CD8-positive, alpha-beta T cell (primary cell): ENCODE measurements at regions of chr1 and their contacts with region 1.

Region 1: DNA sequence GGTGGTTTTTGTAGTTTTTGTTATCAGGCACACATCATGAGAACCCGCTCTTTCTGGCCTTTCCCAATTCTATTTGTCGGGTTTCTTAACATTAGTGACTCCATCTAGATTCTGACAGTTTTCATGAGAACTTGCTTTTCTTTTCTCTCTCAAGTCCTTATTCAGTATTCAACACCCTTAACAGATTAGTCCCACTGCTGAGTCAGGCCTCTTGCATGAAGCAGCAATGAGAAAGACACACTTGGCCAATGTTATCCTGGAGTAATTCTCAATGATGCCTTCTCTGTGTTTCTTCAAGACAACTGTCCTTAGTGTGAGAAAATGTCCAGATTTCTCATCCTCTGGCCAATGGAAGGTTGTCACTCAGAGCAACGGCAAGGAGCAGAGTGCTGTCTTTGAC is 11.3 kb downstream of the FMO2 start:
- DNase-seq: no peak
- ATAC-seq: no peak
- H3K4me3 ChIP-seq: no peak overlapping the region
- H3K4me3 Mint-ChIP-seq: no peak overlapping the region
- H3K27ac ChIP-seq: no peak overlapping the region
- H3K27ac Mint-ChIP-seq: no peak overlapping the region
- H3K4me1 ChIP-seq: no peaks in the 10 kb centered on the region
- H3K4me1 Mint-ChIP-seq: no peaks in the 10 kb centered on the region
- H3K27me3 ChIP-seq: no peaks in the 10 kb centered on the region
- H3K27me3 Mint-ChIP-seq: no peaks in the 10 kb centered on the region
- CTCF ChIP-seq: no peak

Region 2: GRCh38 chr1:170749549-170749948 is 446.8 kb before region 1 on chr1:
- CTCF ChIA-PET with region 1: no interaction called
- POLR2A ChIA-PET with region 1: no interaction called
- intact Hi-C with region 1: no loop called
- DNase-seq: no peak
- ATAC-seq: no peak
- H3K4me3 ChIP-seq: no peak overlapping the region
- H3K4me3 Mint-ChIP-seq: no peak overlapping the region
- H3K27ac ChIP-seq: no peak overlapping the region
- H3K27ac Mint-ChIP-seq: no peak overlapping the region
- H3K4me1 ChIP-seq: no peaks in the 10 kb centered on the region
- H3K4me1 Mint-ChIP-seq: no peaks in the 10 kb centered on the region
- H3K27me3 ChIP-seq: no peaks in the 10 kb centered on the region
- H3K27me3 Mint-ChIP-seq: peaks cover 12% of the 10 kb centered on the region
- CTCF ChIP-seq: no peak

Region 3: DNA sequence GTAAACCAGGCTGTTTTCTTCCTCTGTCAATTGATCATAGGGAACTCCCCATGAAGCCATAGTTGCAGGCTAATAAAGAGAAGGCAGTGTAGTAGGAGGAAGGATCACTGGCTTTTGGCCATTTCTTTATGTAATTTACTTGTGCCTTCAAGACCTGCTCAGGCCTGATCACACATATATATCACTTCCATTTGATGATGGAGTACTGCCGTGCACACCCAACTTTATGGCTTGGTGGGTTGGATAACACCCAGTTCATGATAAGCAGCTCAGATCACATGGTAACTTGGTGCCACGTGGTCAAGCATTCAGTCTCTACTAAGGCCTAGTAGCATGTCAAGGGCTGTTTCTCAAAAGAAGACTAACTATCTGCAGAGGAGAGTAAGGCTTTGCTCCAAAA is 256.9 kb before region 1 on chr1:
- CTCF ChIA-PET with region 1: no interaction called
- POLR2A ChIA-PET with region 1: no interaction called
- intact Hi-C with region 1: no loop called
- DNase-seq: no peak
- ATAC-seq: no peak
- H3K4me3 ChIP-seq: no peak overlapping the region
- H3K4me3 Mint-ChIP-seq: no peak overlapping the region
- H3K27ac ChIP-seq: no peak overlapping the region
- H3K27ac Mint-ChIP-seq: no peak overlapping the region
- H3K4me1 ChIP-seq: no peaks in the 10 kb centered on the region
- H3K4me1 Mint-ChIP-seq: no peaks in the 10 kb centered on the region
- H3K27me3 ChIP-seq: no peaks in the 10 kb centered on the region
- H3K27me3 Mint-ChIP-seq: peaks cover 15% of the 10 kb centered on the region
- CTCF ChIP-seq: no peak

Region 4: DNA sequence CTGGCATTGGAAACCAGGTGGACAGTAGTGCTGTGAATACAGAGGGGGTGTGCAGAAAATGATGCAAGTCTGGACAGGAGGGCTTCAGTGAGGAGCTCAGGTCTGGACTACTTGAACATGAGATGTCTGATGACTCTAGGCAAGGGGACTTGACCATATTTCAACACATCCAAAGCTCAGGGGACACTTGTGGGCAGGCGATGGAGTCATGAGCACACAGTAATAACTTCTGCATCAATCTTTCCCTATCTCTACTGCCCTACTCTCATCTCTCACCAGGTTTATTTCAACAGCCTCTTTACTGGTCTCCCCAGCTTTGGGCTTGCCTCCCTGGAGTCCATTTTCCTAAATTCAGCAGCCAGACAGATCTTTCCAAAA is 10.6 kb after region 1 on chr1:
- CTCF ChIA-PET with region 1: no interaction called
- POLR2A ChIA-PET with region 1: no interaction called
- intact Hi-C with region 1: no loop called
- DNase-seq: no peak
- ATAC-seq: no peak
- H3K4me3 ChIP-seq: no peak overlapping the region
- H3K4me3 Mint-ChIP-seq: no peak overlapping the region
- H3K27ac ChIP-seq: no peak overlapping the region
- H3K27ac Mint-ChIP-seq: no peak overlapping the region
- H3K4me1 ChIP-seq: no peaks in the 10 kb centered on the region
- H3K4me1 Mint-ChIP-seq: no peaks in the 10 kb centered on the region
- H3K27me3 ChIP-seq: no peaks in the 10 kb centered on the region
- H3K27me3 Mint-ChIP-seq: peaks cover 10% of the 10 kb centered on the region
- CTCF ChIP-seq: no peak

Region 5: GRCh38 chr1:171217666-171218443 is 21.5 kb after region 1 on chr1:
- CTCF ChIA-PET with region 1: no interaction called
- POLR2A ChIA-PET with region 1: no interaction called
- intact Hi-C with region 1: loop called in 1 of 2 experiments (anchors 1 kb)
- DNase-seq: no peak
- ATAC-seq: no peak
- H3K4me3 ChIP-seq: no peak overlapping the region
- H3K4me3 Mint-ChIP-seq: no peak overlapping the region
- H3K27ac ChIP-seq: no peak overlapping the region
- H3K27ac Mint-ChIP-seq: no peak overlapping the region
- H3K4me1 ChIP-seq: no peaks in the 10 kb centered on the region
- H3K4me1 Mint-ChIP-seq: no peaks in the 10 kb centered on the region
- H3K27me3 ChIP-seq: no peaks in the 10 kb centered on the region
- H3K27me3 Mint-ChIP-seq: peaks cover 13% of the 10 kb centered on the region
- CTCF ChIP-seq: no peak

Region 6: DNA sequence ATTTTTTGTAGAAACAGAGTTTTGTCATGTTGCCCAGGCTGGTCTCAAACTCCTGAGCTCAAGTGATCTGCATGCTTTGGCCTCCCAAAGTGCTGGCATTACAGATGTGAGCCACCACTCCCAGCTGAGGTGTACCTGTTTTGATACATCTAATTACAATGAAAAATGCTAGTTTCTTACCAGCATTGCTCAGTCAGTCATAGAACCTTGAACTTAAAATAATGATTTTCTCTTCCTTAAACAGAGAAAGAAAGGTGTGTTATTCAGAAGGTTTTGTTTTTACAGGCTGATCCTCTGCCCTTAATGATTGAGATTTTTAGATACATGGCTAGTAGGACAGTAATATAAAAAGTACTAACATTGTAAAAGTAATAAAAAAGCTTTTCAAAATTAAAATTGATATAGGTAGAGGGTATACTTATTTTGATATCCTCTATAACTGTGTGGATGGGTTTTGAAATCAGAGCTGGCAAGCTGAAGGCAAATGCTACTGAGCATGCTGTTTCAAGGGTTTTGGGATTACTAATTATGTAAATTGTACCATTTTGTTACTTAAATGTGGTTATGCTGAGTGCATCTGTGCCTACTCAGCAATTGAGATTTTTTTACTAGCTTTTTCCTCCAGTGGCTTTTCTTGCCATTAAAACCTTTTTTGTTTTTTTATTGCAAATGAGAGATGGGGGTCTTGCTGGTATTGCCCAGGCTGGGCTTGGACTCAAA is 305.1 kb after region 1 on chr1:
- CTCF ChIA-PET with region 1: no interaction called
- POLR2A ChIA-PET with region 1: no interaction called
- intact Hi-C with region 1: no loop called
- DNase-seq: no peak
- ATAC-seq: no peak
- H3K4me3 ChIP-seq: no peak overlapping the region
- H3K4me3 Mint-ChIP-seq: no peak overlapping the region
- H3K27ac ChIP-seq: no peak overlapping the region
- H3K27ac Mint-ChIP-seq: peak overlapping the region; percentile 6
- H3K4me1 ChIP-seq: peaks cover 71% of the 10 kb centered on the region
- H3K4me1 Mint-ChIP-seq: peaks cover 92% of the 10 kb centered on the region
- H3K27me3 ChIP-seq: no peaks in the 10 kb centered on the region
- H3K27me3 Mint-ChIP-seq: no peaks in the 10 kb centered on the region
- CTCF ChIP-seq: no peak